Tibial artery (tissue), 4 donors: ENCODE measurements at regions of chr2 and their contacts with region 1.

Region 1: DNA sequence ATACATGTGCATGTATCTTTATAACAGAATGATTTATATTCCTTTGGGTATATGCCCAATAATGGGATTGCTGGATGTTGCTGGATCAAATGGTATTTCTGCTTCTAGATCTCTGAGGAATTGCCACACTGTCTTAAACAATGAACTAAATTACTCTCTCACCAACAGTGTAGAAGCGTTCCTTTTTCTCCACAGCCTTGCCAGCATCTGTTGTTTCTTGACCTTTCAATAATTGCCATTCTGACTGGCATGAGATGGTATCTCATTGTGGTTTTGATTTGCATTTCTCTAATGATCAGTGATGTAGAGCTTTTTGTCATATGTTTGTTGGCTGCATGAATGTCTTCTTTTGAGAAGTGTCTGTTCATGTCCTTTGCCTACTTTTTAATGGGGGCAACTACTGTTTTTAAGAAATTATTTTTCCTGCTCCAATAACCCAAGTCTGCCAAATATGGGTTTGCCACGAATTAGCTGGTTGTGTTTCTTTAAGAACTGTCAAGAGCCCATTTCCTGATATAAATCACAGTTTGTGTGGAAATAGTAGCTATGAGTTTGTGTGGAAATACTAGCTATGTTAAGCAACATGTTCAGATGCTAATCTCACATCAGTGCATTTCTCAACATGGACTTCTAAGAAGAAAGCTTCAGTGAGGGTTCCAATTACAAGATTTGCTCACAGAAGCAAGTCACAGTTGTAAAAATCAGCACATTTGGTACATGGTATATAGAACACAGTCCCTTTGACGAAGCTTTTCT is 259.4 kb downstream of the ANAPC1 start:
- DNase-seq: no peak
- H3K4me3 ChIP-seq: no peak overlapping the region
- H3K27ac ChIP-seq: no peak overlapping the region
- H3K4me1 ChIP-seq: peaks cover 0 to 14% (median 3%) of the 10 kb centered on the region in 4 donors
- H3K27me3 ChIP-seq: no peaks in the 10 kb centered on the region
- CTCF ChIP-seq: no peak

Region 2: DNA sequence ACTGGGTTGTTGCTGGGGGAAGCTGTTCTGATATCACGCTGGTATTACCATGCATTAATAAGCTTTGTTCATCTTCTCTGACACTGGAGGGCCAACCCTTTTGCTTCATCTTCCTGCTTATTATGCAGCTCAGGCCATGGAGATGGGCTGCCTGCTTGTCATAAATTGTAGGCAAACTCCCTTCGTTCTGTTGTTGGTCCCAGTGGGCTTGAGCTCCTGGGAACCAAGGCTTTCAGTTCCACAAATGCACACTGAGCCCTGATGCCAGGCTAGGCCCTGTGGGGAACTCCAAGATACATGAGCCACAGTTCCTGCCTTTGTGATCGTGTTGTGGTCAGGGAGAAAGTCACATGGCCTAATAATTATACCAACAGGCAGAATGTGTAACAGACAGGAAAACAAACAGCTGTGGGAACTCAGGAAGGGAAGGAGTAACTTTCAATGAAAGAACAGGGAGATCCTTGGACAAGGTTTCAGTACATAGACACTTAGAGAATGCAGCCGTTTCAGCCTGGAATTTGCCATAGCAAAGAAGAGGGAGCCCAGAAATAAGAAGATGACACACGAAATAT is 552.9 kb before region 1 on chr2:
- intact Hi-C with region 1: no loop called
- DNase-seq: peak in 1 of 2 donors; percentile 43
- H3K4me3 ChIP-seq: no peak overlapping the region
- H3K27ac ChIP-seq: peak overlapping the region; percentile 26 to 49
- H3K4me1 ChIP-seq: peaks cover 0 to 23% (median 14%) of the 10 kb centered on the region in 4 donors
- H3K27me3 ChIP-seq: no peaks in the 10 kb centered on the region
- CTCF ChIP-seq: no peak

Region 3: DNA sequence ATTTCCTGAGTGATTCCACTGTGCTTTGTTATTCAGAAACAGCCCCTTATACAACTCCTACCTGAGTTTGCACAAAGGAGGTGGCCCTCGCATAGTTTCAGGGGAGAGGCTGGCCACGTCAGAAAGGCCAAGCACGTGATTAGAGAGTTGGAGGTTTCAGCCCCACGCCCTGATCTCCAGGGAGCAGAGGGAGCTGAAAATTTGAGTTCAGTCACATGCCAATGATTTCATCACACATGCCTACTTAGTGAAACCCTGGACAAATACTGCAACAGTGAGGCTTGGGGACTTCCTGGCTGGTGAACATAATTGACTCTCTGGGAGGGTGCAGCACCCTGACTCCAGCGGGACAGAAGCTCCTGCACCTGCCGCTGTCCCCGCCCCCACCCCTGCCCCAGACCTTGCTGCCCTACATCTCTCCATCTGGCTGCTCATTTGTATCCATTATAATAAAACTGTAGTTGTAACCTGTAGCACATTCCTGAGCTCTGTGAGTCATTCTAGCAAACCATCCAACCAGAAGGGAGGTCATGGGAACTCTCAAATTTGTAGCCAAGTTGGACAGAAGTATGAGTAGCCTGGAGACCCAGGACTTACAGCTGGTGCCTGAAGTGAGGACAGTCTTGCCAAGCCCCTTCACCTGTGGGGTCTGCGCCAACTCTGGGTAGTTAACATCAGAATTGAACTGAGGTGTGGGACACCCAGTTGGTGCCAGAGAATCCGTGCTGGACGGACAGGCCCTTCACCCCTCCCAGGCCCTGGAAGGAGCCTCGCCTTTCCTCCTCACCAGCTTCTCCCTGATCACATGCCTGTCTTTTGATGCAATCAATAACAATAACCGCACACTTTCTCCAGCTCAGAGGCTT is 35.1 kb after region 1 on chr2:
- intact Hi-C with region 1: loop called (anchors 5 kb)
- DNase-seq: peak; percentile 87 to 91
- H3K4me3 ChIP-seq: no peak overlapping the region
- H3K27ac ChIP-seq: peak overlapping the region; percentile 59 to 78
- H3K4me1 ChIP-seq: peaks cover 0 to 35% (median 20%) of the 10 kb centered on the region in 4 donors
- H3K27me3 ChIP-seq: no peaks in the 10 kb centered on the region
- CTCF ChIP-seq: no peak

Region 4: DNA sequence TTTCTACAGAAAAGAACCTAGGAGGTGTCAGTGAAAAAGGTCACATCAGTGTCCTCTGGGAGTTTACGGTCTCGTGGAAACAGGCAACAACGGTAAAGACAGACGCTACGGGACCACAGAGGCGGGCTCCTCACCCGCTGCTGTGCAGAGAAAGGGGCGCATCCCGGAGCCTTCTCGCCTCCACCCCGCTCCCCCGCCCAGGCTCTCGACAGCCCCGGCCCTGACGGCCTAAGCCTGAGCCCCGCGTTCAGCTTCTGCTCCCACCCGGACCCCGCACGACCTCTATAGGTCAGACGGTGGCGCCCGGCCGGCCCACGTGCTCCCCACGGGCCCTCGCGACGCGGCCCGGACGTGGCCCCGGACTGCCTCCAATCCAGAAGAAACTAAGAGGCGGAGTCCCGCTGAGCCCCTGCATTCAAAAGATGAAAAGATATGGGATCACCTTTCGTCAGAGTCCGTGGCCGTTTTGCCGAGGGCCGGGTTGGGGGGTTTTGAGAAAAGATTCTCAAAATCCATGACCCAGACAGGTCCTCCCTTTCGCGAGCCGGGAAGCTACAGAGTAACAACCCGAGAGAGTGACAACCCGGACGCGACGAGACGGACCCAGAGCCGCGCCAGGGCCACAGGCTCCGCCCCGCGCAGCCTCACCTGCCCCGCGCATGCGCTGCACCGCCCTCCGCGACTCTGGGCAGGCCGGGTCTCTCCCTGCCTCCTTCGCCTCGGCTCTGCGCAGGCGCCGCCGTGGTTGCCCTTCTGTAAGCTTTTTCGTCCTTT is 630.1 kb after region 1 on chr2 and contains the start of gene ZC3H8:
- intact Hi-C with region 1: no loop called
- DNase-seq: peak; percentile 89 to 96
- H3K4me3 ChIP-seq: peak within 1 kb of the TSS; percentile 62 to 68
- H3K27ac ChIP-seq: peak within 1 kb of the TSS; percentile 70
- H3K4me1 ChIP-seq: peaks cover 0 to 14% (median 9%) of the 10 kb centered on the region in 4 donors
- H3K27me3 ChIP-seq: no peaks in the 10 kb centered on the region
- CTCF ChIP-seq: no peak